ENCODE measurements at regions of chr17 and their contacts with region 1.

Region 1: GRCh38 chr17:58517734-58518609 is 3.5 kb upstream of the MTMR4 start:
- DNase-seq: peak; percentile 92 to 100 (median 100)
- ATAC-seq: peak; percentile 89
- H3K4me3 ChIP-seq: peak overlapping the region; percentile 99
- H3K4me3 Mint-ChIP-seq: peak overlapping the region; percentile 92 to 98 (median 96)
- H3K27ac ChIP-seq: peak overlapping the region; percentile 84
- H3K27ac Mint-ChIP-seq: peak overlapping the region; percentile 82 to 97 (median 95)
- H3K4me1 ChIP-seq: peaks cover 20 to 28% of the 10 kb centered on the region in 2 donors
- H3K4me1 Mint-ChIP-seq: peaks cover 30 to 49% (median 46%) of the 10 kb centered on the region in 7 donors
- H3K27me3 ChIP-seq: no peaks in the 10 kb centered on the region
- H3K27me3 Mint-ChIP-seq: peaks cover 0 to 5% (median 0%) of the 10 kb centered on the region in 5 donors

Region 2: GRCh38 chr17:56833809-56834379 is 1684.1 kb before region 1 on chr17 and contains the starts of genes C17orf67 and DGKE:
- CTCF ChIA-PET with region 1: no interaction called
- POLR2A ChIA-PET with region 1: no interaction called
- intact Hi-C with region 1: loop called (anchors 2 to 5 kb)
- DNase-seq: peak; percentile 95 to 100 (median 98)
- ATAC-seq: peak; percentile 97
- H3K4me3 ChIP-seq: peak within 1 kb of the TSS; percentile 91
- H3K4me3 Mint-ChIP-seq: peak within 1 kb of the TSS; percentile 91 to 98 (median 95)
- H3K27ac ChIP-seq: peak within 1 kb of the TSS; percentile 85
- H3K27ac Mint-ChIP-seq: peak within 1 kb of the TSS; percentile 83 to 95 (median 93)
- H3K4me1 ChIP-seq: peaks cover 41 to 42% of the 10 kb centered on the region in 2 donors
- H3K4me1 Mint-ChIP-seq: peaks cover 34 to 74% (median 62%) of the 10 kb centered on the region in 7 donors
- H3K27me3 ChIP-seq: no peaks in the 10 kb centered on the region
- H3K27me3 Mint-ChIP-seq: no peaks in the 10 kb centered on the region
- total RNA-seq, gene C17orf67: 3.6 to 9.1 (median 5.4) TPM
- total RNA-seq, gene DGKE: 23.7 to 39.2 (median 35.6) TPM

Region 3: DNA sequence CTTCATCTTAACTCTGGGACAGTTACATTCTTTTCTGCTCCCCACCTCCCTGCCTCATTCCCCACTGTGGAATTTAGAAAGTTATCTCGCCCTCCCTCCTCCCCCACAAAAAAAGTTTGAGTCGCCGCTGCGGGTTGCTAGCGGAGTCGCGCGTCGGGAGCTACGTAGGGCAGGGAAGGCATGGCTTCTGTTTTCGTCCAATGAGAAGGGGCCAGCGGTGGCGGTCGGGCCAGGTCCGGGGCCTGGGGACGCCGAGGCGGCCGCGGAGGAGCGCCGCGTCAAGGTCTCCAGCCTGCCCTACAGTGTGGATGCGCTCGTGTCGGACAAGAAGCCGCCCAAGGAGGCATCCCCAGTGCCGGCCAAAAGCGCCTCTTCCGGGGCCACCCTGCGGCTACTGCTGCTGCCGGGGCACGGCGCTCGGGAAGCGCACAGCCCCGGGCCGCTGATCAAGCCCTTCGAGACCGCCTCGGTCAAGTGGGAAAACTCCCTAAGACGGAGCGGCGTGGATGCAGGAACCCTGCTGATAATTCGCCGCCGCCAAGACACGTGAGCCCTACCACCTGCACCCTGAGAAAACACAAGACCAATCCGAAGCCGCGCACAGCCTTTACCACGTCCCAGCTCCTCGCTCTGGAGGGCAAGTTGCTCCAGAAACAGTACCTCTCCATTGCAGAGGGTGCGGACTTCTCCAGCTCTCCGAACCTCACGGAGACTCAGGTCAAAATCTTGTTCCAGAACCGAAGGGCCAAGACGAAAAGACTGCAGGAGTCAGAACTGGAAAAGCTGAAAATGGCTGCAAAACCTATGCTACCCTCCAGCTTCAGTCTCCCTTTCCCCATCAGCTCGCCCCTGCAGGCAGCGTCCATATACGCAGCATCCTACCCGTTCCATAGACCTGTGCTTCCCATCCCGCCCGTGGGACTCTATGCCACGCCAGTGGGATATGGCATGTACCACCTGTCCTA is 360.9 kb before region 1 on chr17:
- CTCF ChIA-PET with region 1: no interaction called
- POLR2A ChIA-PET with region 1: no interaction called
- intact Hi-C with region 1: loop called in 1 of 2 experiments (anchors 5 kb)
- DNase-seq: peak; percentile 31 to 61 (median 55)
- ATAC-seq: peak; percentile 74
- H3K4me3 ChIP-seq: peak overlapping the region; percentile 56
- H3K4me3 Mint-ChIP-seq: peak overlapping the region; percentile 90 to 97 (median 94)
- H3K27ac ChIP-seq: peak overlapping the region; percentile 88
- H3K27ac Mint-ChIP-seq: peak overlapping the region; percentile 86 to 98 (median 93)
- H3K4me1 ChIP-seq: peaks cover 40 to 48% of the 10 kb centered on the region in 2 donors
- H3K4me1 Mint-ChIP-seq: peaks cover 41 to 86% (median 73%) of the 10 kb centered on the region in 7 donors
- H3K27me3 ChIP-seq: no peaks in the 10 kb centered on the region
- H3K27me3 Mint-ChIP-seq: peaks cover 0 to 29% (median 0%) of the 10 kb centered on the region in 5 donors

Region 4: GRCh38 chr17:58284320-58285067 is 233.5 kb before region 1 on chr17:
- CTCF ChIA-PET with region 1: no interaction called
- POLR2A ChIA-PET with region 1: no interaction called
- intact Hi-C with region 1: no loop called
- DNase-seq: no peak
- ATAC-seq: no peak
- H3K4me3 ChIP-seq: no peak overlapping the region
- H3K4me3 Mint-ChIP-seq: no peak overlapping the region
- H3K27ac ChIP-seq: no peak overlapping the region
- H3K27ac Mint-ChIP-seq: no peak overlapping the region
- H3K4me1 ChIP-seq: no peaks in the 10 kb centered on the region
- H3K4me1 Mint-ChIP-seq: peaks cover 0 to 8% (median 5%) of the 10 kb centered on the region in 7 donors
- H3K27me3 ChIP-seq: no peaks in the 10 kb centered on the region
- H3K27me3 Mint-ChIP-seq: peaks cover 7 to 30% (median 24%) of the 10 kb centered on the region in 5 donors

Region 5: GRCh38 chr17:58531661-58532554 is 13.9 kb after region 1 on chr17:
- CTCF ChIA-PET with region 1: interaction called, 5 read pairs
- POLR2A ChIA-PET with region 1: interaction called, 9 read pairs
- intact Hi-C with region 1: loop called (anchors 1 kb)
- DNase-seq: peak; percentile 34 to 82 (median 55)
- ATAC-seq: peak; percentile 91
- H3K4me3 ChIP-seq: peak overlapping the region; percentile 50
- H3K4me3 Mint-ChIP-seq: peak overlapping the region; percentile 49 to 79 (median 69)
- H3K27ac ChIP-seq: no peak overlapping the region
- H3K27ac Mint-ChIP-seq: no peak overlapping the region
- H3K4me1 ChIP-seq: peaks cover 0 to 4% of the 10 kb centered on the region in 2 donors
- H3K4me1 Mint-ChIP-seq: peaks cover 0 to 23% (median 4%) of the 10 kb centered on the region in 7 donors
- H3K27me3 ChIP-seq: peaks cover 0 to 3% of the 10 kb centered on the region in 2 donors
- H3K27me3 Mint-ChIP-seq: peaks cover 16 to 73% (median 24%) of the 10 kb centered on the region in 5 donors

Region 6: GRCh38 chr17:58710936-58711775 is 193.2 kb after region 1 on chr17:
- CTCF ChIA-PET with region 1: interaction called, 3 read pairs
- POLR2A ChIA-PET with region 1: interaction called, 5 read pairs
- intact Hi-C with region 1: loop called (anchors 1 to 5 kb)
- DNase-seq: peak in 7 of 9 donors; percentile 12 to 37 (median 32)
- ATAC-seq: no peak
- H3K4me3 ChIP-seq: no peak overlapping the region
- H3K4me3 Mint-ChIP-seq: no peak overlapping the region
- H3K27ac ChIP-seq: no peak overlapping the region
- H3K27ac Mint-ChIP-seq: peak overlapping the region in 1 of 9 donors; percentile 42
- H3K4me1 ChIP-seq: no peaks in the 10 kb centered on the region
- H3K4me1 Mint-ChIP-seq: peaks cover 0 to 12% (median 4%) of the 10 kb centered on the region in 7 donors
- H3K27me3 ChIP-seq: no peaks in the 10 kb centered on the region
- H3K27me3 Mint-ChIP-seq: no peaks in the 10 kb centered on the region

Region 7: GRCh38 chr17:59565171-59565969 is 1047.4 kb after region 1 on chr17 and contains the start of gene DHX40:
- CTCF ChIA-PET with region 1: no interaction called
- POLR2A ChIA-PET with region 1: no interaction called
- intact Hi-C with region 1: loop called (anchors 5 kb)
- DNase-seq: peak; percentile 80 to 95 (median 92)
- ATAC-seq: peak; percentile 97
- H3K4me3 ChIP-seq: peak within 1 kb of the TSS; percentile 92
- H3K4me3 Mint-ChIP-seq: peak within 1 kb of the TSS; percentile 97 to 100 (median 100)
- H3K27ac ChIP-seq: peak within 1 kb of the TSS; percentile 95
- H3K27ac Mint-ChIP-seq: peak within 1 kb of the TSS; percentile 98 to 100 (median 100)
- H3K4me1 ChIP-seq: peaks cover 10 to 14% of the 10 kb centered on the region in 2 donors
- H3K4me1 Mint-ChIP-seq: peaks cover 0 to 30% (median 23%) of the 10 kb centered on the region in 7 donors
- H3K27me3 ChIP-seq: no peaks in the 10 kb centered on the region
- H3K27me3 Mint-ChIP-seq: peaks cover 0 to 3% (median 0%) of the 10 kb centered on the region in 5 donors
- total RNA-seq, gene DHX40: 21.3 to 44.9 (median 29.4) TPM

Measured in naive thymus-derived CD4-positive, alpha-beta T cell (primary cell).